ENCODE measurements at regions of chr11 and their contacts with region 1.

Region 1: DNA sequence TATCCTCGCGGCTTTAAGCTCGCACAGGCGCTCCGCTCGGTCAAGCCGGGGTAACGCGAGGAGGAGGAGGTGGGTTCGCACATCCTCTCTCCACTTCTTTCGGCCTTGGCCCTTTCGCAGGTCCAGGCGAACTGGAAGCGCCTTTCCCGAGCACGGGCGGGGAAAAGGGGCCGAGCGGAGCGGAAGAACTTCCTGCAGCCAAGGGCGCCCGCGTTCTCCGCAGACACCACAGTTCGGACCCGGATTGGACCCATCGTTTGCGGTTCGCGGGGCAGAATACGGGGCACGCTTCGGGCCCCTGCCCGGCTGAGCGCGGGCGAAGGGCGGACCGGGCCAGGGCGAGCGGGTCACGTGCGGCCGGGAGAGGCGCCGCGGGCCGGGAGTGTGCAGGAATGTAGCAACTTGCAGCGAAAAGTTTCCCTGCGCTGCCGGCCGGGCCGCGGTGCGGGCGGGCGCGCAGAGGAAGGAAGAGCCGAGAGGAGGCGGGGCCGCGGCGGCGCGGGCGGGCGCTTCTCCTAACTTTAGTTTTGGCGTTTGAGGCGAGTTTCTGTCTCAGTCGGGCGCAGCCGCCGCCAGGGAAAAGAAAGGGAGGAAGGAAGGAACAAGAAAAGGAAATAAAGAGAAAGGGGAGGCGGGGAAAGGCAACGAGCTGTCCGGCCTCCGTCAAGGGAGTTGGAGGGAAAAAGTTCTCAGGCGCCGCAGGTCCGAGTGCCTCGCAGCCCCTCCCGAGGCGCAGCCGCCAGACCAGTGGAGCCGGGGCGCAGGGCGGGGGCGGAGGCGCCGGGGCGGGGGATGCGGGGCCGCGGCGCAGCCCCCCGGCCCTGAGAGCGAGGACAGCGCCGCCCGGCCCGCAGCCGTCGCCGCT is at the start of gene YAP1:
- DNase-seq: peak; percentile 93 to 97
- ATAC-seq: peak; percentile 93
- H3K4me3 ChIP-seq: peak within 1 kb of the TSS; percentile 93 to 99
- H3K27ac ChIP-seq: peak within 1 kb of the TSS; percentile 96 to 99
- H3K4me1 ChIP-seq: no peaks in the 10 kb centered on the region
- H3K27me3 ChIP-seq: no peaks in the 10 kb centered on the region
- total RNA-seq, gene YAP1: 215 to 393 TPM

Region 2: DNA sequence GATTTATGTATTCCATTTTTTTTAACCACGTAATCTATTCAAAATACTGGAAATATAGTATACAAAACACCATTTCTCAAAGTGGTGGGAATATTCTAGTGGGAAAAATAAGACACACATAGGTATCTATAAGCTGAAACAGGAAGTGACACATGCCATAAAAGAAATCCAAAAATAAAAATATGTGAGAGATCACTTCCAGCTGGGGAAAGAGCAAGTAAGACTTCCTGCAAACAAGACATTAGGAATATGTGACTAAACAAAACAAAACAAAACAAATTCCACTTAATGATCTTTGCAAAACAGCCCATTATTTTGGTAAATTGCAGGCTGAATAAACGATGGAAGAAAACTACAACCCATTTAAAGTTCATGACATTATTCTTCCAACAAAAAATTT is 302.6 kb before region 1 on chr11:
- intact Hi-C with region 1: no loop called
- DNase-seq: no peak
- ATAC-seq: no peak
- H3K4me3 ChIP-seq: no peak overlapping the region
- H3K27ac ChIP-seq: no peak overlapping the region
- H3K4me1 ChIP-seq: no peaks in the 10 kb centered on the region
- H3K27me3 ChIP-seq: no peaks in the 10 kb centered on the region

Region 3: GRCh38 chr11:101914738-101915426 is 195.2 kb before region 1 on chr11 and contains the start of gene CEP126:
- intact Hi-C with region 1: loop called in 1 of 2 experiments (anchors 10 kb)
- DNase-seq: peak; percentile 97 to 98
- ATAC-seq: peak; percentile 96
- H3K4me3 ChIP-seq: peak within 1 kb of the TSS; percentile 36 to 66
- H3K27ac ChIP-seq: peak within 1 kb of the TSS; percentile 77 to 83
- H3K4me1 ChIP-seq: peaks cover 3 to 4% of the 10 kb centered on the region in 2 donors
- H3K27me3 ChIP-seq: no peaks in the 10 kb centered on the region
- total RNA-seq, gene CEP126: 9.8 to 13.2 TPM

Region 4: GRCh38 chr11:102047305-102047924 is 62.7 kb before region 1 on chr11 and contains the start of gene CFAP300:
- intact Hi-C with region 1: loop called in 1 of 2 experiments (anchors 2 kb)
- DNase-seq: peak; percentile 96 to 99
- ATAC-seq: peak; percentile 96
- H3K4me3 ChIP-seq: peak within 1 kb of the TSS; percentile 56 to 86
- H3K27ac ChIP-seq: peak within 1 kb of the TSS; percentile 3 to 87
- H3K4me1 ChIP-seq: no peaks in the 10 kb centered on the region
- H3K27me3 ChIP-seq: no peaks in the 10 kb centered on the region
- total RNA-seq, gene CFAP300: 3.2 to 5.4 TPM

Region 5: GRCh38 chr11:102171101-102171500 is 61.0 kb after region 1 on chr11:
- intact Hi-C with region 1: loop called (anchors 2 to 5 kb)
- DNase-seq: no peak
- ATAC-seq: peak; percentile 77
- H3K4me3 ChIP-seq: peak overlapping the region in 1 of 2 donors; percentile 34
- H3K27ac ChIP-seq: no peak overlapping the region
- H3K4me1 ChIP-seq: peaks cover 0 to 9% of the 10 kb centered on the region in 2 donors
- H3K27me3 ChIP-seq: no peaks in the 10 kb centered on the region

Region 6: DNA sequence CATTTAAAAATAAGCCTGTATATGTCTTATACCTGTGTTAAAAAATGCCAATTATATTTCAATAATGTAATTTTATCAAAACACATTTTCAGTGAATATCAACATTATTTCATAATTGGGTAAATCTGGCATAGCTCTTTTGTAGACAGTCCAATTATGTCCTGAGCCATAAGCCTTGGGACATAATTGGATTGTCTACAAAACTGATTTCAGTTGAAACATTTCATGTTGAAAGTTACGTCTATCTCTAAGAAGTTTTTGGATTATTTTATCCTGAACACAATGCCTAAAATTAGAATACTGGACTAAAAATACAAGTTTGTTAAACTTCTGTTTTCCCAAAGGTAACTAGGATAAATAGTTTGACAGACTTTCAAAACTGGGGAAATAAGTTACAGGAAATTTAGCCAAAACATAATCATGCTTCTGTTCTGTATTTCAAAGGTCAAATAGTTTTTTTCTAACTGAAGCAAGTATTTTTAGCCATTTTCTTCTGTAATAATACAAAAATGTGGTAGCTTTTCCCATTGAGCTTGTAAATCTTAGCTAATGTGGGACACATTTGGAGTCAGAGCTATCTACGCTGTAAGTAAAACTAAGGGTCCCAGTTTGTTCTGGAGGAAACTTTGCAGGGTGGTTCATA is 106.4 kb after region 1 on chr11:
- intact Hi-C with region 1: loop called (anchors 10 kb)
- DNase-seq: no peak
- ATAC-seq: peak; percentile 70
- H3K4me3 ChIP-seq: peak overlapping the region in 1 of 2 donors; percentile 10
- H3K27ac ChIP-seq: peak overlapping the region; percentile 57 to 82
- H3K4me1 ChIP-seq: peaks cover 0 to 4% of the 10 kb centered on the region in 2 donors
- H3K27me3 ChIP-seq: no peaks in the 10 kb centered on the region

Region 7: DNA sequence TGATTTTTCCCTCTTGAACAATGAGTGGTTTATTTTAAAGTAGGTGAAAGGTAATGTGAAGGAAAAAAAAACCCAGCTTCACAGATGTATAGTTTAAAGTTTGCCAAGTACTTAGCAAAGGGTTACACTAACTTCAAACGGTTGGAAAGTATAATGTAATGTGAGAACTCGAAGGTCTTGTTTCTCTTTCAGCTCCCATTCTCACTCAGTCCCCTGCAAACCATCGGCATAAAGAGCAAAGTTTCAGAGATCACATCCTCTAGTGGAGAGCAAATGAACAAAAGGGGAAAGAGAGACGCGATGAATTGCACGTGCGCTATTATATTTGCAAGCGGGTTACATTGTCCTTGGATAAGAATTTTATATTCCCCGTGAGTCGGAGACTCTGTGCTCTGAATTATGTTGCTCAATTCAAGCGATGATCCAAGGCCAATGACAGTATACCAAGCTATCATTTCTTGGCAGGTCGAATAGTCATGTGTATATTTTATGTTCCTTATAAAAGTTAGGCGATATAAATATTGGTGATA is 169.6 kb after region 1 on chr11:
- intact Hi-C with region 1: loop called in 1 of 2 experiments (anchors 5 kb)
- DNase-seq: no peak
- ATAC-seq: peak; percentile 54
- H3K4me3 ChIP-seq: no peak overlapping the region
- H3K27ac ChIP-seq: peak overlapping the region in 1 of 2 donors; percentile 28
- H3K4me1 ChIP-seq: peaks cover 0 to 3% of the 10 kb centered on the region in 2 donors
- H3K27me3 ChIP-seq: no peaks in the 10 kb centered on the region

Measured in aorta (tissue), 5 donors.